ENCODE measurements at regions of chr11 and their contacts with region 1.

Region 1: DNA sequence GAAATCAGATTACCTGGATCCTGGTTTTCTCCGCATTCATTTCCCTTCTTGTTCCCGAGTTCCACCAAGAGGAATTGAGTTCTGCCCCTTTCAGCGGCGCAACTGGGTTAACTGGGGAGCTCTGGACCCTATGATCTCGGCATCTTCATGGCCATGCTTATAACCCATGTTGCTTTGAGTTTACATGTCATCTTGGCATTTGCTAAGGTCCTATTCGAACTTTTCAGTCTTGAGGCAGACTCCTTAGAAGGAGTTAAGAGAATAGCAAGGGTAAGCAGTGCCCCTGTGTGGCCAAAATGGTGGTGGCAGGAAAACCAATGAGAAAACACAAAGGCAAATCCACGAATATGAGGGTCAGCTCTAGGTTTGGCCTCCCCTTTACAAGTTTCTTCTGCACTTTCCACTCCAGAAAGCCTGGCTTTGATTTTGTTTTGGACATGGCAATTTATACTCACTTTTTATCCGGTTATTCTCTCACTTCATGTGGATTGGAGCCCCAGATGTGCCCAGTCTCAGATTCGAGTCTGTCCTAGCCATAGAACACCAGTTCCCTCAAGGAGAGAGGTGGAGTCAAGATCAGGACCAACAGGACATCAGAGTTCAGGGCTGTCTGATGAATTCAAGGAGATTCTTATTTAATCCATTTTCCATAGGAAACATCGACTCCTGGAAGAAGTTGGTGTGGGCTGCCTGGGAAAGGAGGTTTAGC is 55.3 kb upstream of the FBXO3 start:
- DNase-seq: peak; percentile 86
- H3K4me3 Mint-ChIP-seq: peak overlapping the region; percentile 75
- H3K27ac Mint-ChIP-seq: no peak overlapping the region
- H3K4me1 Mint-ChIP-seq: peaks cover 2% of the 10 kb centered on the region
- H3K27me3 Mint-ChIP-seq: peaks cover 50% of the 10 kb centered on the region

Region 2: DNA sequence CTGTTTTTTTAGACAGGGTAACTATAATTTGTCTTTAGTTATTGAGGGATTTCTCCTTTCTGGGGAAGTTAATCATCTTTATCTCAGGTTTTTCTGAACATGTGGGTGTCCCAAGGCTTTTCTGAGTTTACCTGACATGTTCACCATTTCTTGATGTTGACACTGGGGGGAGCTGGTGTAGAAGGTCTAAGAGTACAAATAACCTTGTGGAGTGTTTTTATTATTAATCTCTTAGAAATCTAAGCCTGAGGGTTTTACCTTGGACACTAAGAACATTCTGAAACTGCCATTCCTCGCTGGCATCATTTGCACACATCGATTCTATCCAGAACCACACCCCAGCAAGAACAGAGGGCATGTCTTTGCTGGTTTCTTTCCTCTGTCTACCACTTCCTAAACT is 113.4 kb before region 1 on chr11:
- intact Hi-C with region 1: loop called (anchors 1 kb)
- DNase-seq: no peak
- H3K4me3 Mint-ChIP-seq: no peak overlapping the region
- H3K27ac Mint-ChIP-seq: no peak overlapping the region
- H3K4me1 Mint-ChIP-seq: peaks cover 6% of the 10 kb centered on the region
- H3K27me3 Mint-ChIP-seq: no peaks in the 10 kb centered on the region

Region 3: DNA sequence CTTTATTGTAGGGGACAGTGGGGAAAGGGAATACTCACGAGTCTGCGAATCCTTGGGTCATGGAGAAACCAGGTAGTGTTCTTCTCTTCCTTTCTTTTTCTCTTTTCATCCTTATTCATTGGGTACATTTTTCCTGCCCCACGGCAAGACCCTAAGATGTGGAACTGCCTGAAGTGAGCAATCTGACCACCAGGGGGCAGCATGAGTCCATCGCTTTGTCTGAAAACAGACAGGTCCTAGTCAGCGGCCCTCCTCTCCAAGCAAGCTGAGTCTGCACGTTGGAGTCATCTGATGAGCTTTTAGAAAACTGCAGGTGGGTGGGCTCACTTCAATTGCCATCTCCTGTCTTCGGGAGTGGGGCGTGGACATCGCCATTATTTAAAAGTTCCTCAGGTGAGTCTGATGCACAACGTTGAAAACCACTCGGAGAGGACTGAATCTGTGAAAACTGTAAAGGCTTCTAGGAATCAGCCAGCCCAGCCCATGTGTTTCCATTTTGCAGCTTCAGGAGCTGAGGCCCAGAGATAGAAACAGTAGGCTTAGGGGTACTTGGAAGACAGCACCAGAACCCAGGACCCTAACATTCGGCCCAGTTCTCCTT is 21.3 kb before region 1 on chr11:
- intact Hi-C with region 1: loop called (anchors 1 kb)
- DNase-seq: peak; percentile 93
- H3K4me3 Mint-ChIP-seq: no peak overlapping the region
- H3K27ac Mint-ChIP-seq: no peak overlapping the region
- H3K4me1 Mint-ChIP-seq: peaks cover 3% of the 10 kb centered on the region
- H3K27me3 Mint-ChIP-seq: peaks cover 35% of the 10 kb centered on the region

Region 4: GRCh38 chr11:34051349-34052035 is 221.9 kb after region 1 on chr11 and contains the start of gene CAPRIN1:
- intact Hi-C with region 1: no loop called
- DNase-seq: peak; percentile 95
- H3K4me3 Mint-ChIP-seq: peak within 1 kb of the TSS; percentile 100
- H3K27ac Mint-ChIP-seq: peak within 1 kb of the TSS; percentile 99
- H3K4me1 Mint-ChIP-seq: peaks cover 14% of the 10 kb centered on the region
- H3K27me3 Mint-ChIP-seq: peaks cover 5% of the 10 kb centered on the region
- total RNA-seq, gene CAPRIN1: 318 and 321 TPM in 2 replicates